Dorsolateral prefrontal cortex (tissue), 120 donors: ENCODE measurements at regions of chr13 and their contacts with region 1.

Region 1: GRCh38 chr13:41263261-41264027 is at the start of gene MTRF1:
- DNase-seq: peak; percentile 72 to 91 (median 86)
- H3K4me3 ChIP-seq: peak within 1 kb of the TSS; percentile 49 to 98 (median 78)
- H3K27ac ChIP-seq: peak within 1 kb of the TSS in 58 of 59 donors; percentile 58 to 97 (median 91)
- H3K27me3 ChIP-seq: no peaks in the 10 kb centered on the region
- CTCF ChIP-seq: peak in 15 of 56 donors; percentile 5 to 48 (median 15)
- total RNA-seq, gene MTRF1: 7.2 to 34.6 (median 15.6) TPM

Region 2: GRCh38 chr13:40470660-40471059 is 792.8 kb before region 1 on chr13:
- intact Hi-C with region 1: no loop called
- DNase-seq: no peak
- H3K4me3 ChIP-seq: no peak overlapping the region
- H3K27ac ChIP-seq: peak overlapping the region in 4 of 59 donors; percentile 6 to 31 (median 26)
- H3K27me3 ChIP-seq: no peaks in the 10 kb centered on the region
- CTCF ChIP-seq: no peak

Region 3: GRCh38 chr13:41099986-41100385 is 163.5 kb before region 1 on chr13:
- intact Hi-C with region 1: no loop called
- DNase-seq: no peak
- H3K4me3 ChIP-seq: no peak overlapping the region
- H3K27ac ChIP-seq: no peak overlapping the region
- H3K27me3 ChIP-seq: no peaks in the 10 kb centered on the region
- CTCF ChIP-seq: no peak

Region 4: GRCh38 chr13:41193919-41194824 is 69.3 kb before region 1 on chr13 and contains the start of gene KBTBD7:
- intact Hi-C with region 1: loop called (anchors 2 to 5 kb)
- DNase-seq: peak; percentile 86 to 98 (median 94)
- H3K4me3 ChIP-seq: peak within 1 kb of the TSS; percentile 56 to 96 (median 86)
- H3K27ac ChIP-seq: peak within 1 kb of the TSS; percentile 61 to 97 (median 90)
- H3K27me3 ChIP-seq: no peaks in the 10 kb centered on the region
- CTCF ChIP-seq: peak in 38 of 56 donors; percentile 13 to 55 (median 32)
- total RNA-seq, gene KBTBD7: 9.2 to 16.8 (median 13.1) TPM

Region 5: GRCh38 chr13:41310963-41311606 is 47.6 kb after region 1 on chr13 and contains the start of gene NAA16:
- intact Hi-C with region 1: loop called (anchors 1 to 5 kb)
- DNase-seq: peak; percentile 81 to 95 (median 88)
- H3K4me3 ChIP-seq: peak within 1 kb of the TSS; percentile 66 to 100 (median 96)
- H3K27ac ChIP-seq: peak within 1 kb of the TSS; percentile 63 to 100 (median 97)
- H3K27me3 ChIP-seq: no peaks in the 10 kb centered on the region
- CTCF ChIP-seq: peak in 37 of 56 donors; percentile 5 to 53 (median 28)
- total RNA-seq, gene NAA16: 20.9 to 64.0 (median 31.6) TPM

Region 6: GRCh38 chr13:41398494-41399170 is 135.2 kb after region 1 on chr13:
- intact Hi-C with region 1: no loop called
- DNase-seq: no peak
- H3K4me3 ChIP-seq: no peak overlapping the region
- H3K27ac ChIP-seq: peak overlapping the region in 1 of 59 donors; percentile 23
- H3K27me3 ChIP-seq: no peaks in the 10 kb centered on the region
- CTCF ChIP-seq: no peak